ENCODE measurements at regions of chr1 and their contacts with region 1.

Region 1: GRCh38 chr1:78664763-78665162 is 15.1 kb downstream of the IFI44 start:
- DNase-seq: no peak
- CTCF ChIP-seq: no peak

Region 2: GRCh38 chr1:78676347-78676982 is 11.7 kb after region 1 on chr1:
- CTCF ChIA-PET with region 1: interaction called, 19 read pairs
- POLR2A ChIA-PET with region 1: no interaction called
- DNase-seq: peak; percentile 35
- CTCF ChIP-seq: peak; percentile 85

Region 3: GRCh38 chr1:78702427-78702826 is 37.7 kb after region 1 on chr1:
- CTCF ChIA-PET with region 1: no interaction called
- POLR2A ChIA-PET with region 1: no interaction called
- DNase-seq: no peak
- CTCF ChIP-seq: no peak

Measured in GM10248 (cell line).